Heart left ventricle (tissue), 16 donors: ENCODE measurements at regions of chr20 and their contacts with region 1.

Region 1: DNA sequence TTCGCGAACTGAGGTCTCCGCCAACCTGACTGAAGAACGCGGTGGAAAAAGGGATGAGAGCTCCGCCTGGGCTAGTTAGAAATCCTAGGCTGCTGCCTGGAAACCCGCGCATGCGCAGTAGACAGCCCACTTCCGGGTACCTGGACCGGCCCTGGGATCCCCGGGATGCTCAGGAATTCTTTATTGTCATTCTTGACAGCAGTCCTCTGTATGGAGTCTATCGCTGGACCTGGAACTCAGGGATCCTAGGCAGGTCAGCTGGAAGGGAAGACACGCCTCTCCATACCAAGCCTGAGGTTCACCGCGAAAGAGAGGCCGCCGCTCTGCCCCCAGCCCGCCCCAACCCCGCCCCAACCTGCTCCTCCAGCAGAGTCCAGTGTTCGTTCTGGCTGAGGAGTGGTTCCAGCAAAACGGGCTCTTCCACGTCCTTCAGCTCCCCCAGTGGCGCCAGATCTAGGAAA is 1379.2 kb upstream of the DEFB115 start:
- DNase-seq: peak in 2 of 5 donors; percentile 16 to 62
- ATAC-seq: peak; percentile 38 to 64 (median 58)
- H3K4me3 ChIP-seq: no peak overlapping the region
- H3K27ac ChIP-seq: no peak overlapping the region
- H3K4me1 ChIP-seq: no peaks in the 10 kb centered on the region
- H3K27me3 ChIP-seq: no peaks in the 10 kb centered on the region
- CTCF ChIP-seq: no peak
- POLR2A ChIP-seq: no peak

Region 2: GRCh38 chr20:29123861-29124260 is 754.5 kb before region 1 on chr20:
- intact Hi-C with region 1: loop called in 1 of 10 experiments (anchors 10 kb)
- DNase-seq: no peak
- ATAC-seq: peak in 1 of 4 donors; percentile 37
- H3K4me3 ChIP-seq: no peak overlapping the region
- H3K27ac ChIP-seq: no peak overlapping the region
- H3K4me1 ChIP-seq: no peaks in the 10 kb centered on the region
- H3K27me3 ChIP-seq: no peaks in the 10 kb centered on the region
- CTCF ChIP-seq: no peak
- POLR2A ChIP-seq: no peak

Region 3: DNA sequence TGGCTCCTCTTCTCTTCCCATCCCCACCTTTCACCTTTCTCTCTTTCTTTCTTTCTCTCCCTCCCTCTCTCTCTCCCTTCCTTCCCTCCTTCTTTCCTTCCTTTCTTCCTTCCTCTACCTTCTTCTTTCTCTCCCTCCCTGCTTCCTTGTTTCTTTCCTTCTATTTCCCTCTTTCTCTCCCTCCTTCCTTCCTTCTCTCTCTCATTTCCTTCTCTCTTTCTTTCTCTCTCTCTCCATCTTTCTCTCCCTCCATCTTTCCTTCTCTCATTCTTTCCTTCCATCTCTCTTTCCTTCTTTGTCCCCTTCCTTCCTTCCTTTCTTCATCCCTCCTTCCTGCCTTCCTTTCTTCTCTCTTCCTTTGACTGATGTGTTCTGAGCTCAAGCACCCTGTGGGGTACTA is 87.8 kb before region 1 on chr20:
- intact Hi-C with region 1: no loop called
- DNase-seq: no peak
- ATAC-seq: no peak
- H3K4me3 ChIP-seq: no peak overlapping the region
- H3K27ac ChIP-seq: no peak overlapping the region
- H3K4me1 ChIP-seq: no peaks in the 10 kb centered on the region
- H3K27me3 ChIP-seq: peaks cover 0 to 7% (median 0%) of the 10 kb centered on the region in 9 donors
- CTCF ChIP-seq: no peak
- POLR2A ChIP-seq: no peak

Region 4: GRCh38 chr20:30630761-30631160 is 752.5 kb after region 1 on chr20:
- intact Hi-C with region 1: no loop called
- DNase-seq: no peak
- ATAC-seq: no peak
- H3K4me3 ChIP-seq: no peak overlapping the region
- H3K27ac ChIP-seq: no peak overlapping the region
- H3K4me1 ChIP-seq: no peaks in the 10 kb centered on the region
- H3K27me3 ChIP-seq: no peaks in the 10 kb centered on the region
- CTCF ChIP-seq: no peak
- POLR2A ChIP-seq: no peak